Activated B cell treated with CpG ODN at 0.5 μM for 24 hours (primary cell): ENCODE measurements at regions of chr16 and their contacts with region 1.

Region 1: GRCh38 chr16:21708533-21709115 is 44.9 kb downstream of the OTOA start:
- DNase-seq: peak; percentile 51
- ATAC-seq: peak; percentile 68
- H3K4me3 Mint-ChIP-seq: no peak overlapping the region
- H3K27ac Mint-ChIP-seq: no peak overlapping the region
- H3K4me1 Mint-ChIP-seq: peaks cover 9% of the 10 kb centered on the region
- H3K27me3 Mint-ChIP-seq: no peaks in the 10 kb centered on the region
- CTCF ChIP-seq: no peak

Region 2: DNA sequence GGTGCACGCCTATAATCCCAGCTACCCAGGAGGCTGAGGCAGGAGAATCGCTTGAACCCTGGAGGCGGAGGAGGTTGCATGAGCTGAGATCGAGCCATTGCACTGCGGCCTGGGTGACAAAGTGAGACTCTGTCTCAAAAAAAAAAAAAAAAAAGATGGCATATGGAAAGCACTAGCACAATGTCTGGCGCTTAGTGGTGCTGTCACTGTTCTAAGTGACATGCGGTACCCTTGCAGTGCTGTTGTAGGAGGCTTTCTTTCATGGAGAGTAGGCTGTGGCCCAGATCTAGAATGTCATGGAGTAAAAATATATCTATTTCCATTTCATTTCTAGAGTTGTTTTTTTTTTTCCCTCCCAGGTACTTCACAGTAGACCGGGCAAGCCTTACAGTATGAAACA is 123.8 kb before region 1 on chr16:
- CTCF ChIA-PET with region 1: interaction called, 43 read pairs
- POLR2A ChIA-PET with region 1: interaction called, 11 read pairs
- intact Hi-C with region 1: loop called (anchors 1 kb)
- DNase-seq: no peak
- ATAC-seq: no peak
- H3K4me3 Mint-ChIP-seq: no peak overlapping the region
- H3K27ac Mint-ChIP-seq: no peak overlapping the region
- H3K4me1 Mint-ChIP-seq: peaks cover 12% of the 10 kb centered on the region
- H3K27me3 Mint-ChIP-seq: no peaks in the 10 kb centered on the region
- CTCF ChIP-seq: no peak

Region 3: DNA sequence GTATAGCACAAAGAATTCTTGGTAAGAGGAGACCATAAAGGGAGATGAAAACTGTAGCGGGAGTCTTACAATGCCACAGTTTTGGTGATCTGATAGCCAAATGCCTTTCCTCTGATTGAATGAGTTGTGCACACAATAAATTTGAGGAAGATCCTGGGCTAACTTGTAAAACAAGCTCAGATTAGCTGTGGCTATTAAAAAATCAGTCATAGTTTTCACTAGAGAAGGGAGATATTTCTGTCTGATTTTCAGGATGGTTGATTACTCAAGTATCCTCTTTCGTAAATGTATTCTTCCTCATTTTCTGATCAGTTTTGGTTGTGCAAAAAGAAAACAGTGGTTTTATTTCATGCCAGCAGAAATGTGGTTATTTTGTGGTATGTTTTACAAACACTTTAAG is 118.3 kb before region 1 on chr16:
- CTCF ChIA-PET with region 1: interaction called, 6 read pairs
- POLR2A ChIA-PET with region 1: interaction called, 11 read pairs
- intact Hi-C with region 1: no loop called
- DNase-seq: no peak
- ATAC-seq: no peak
- H3K4me3 Mint-ChIP-seq: peak overlapping the region; percentile 19
- H3K27ac Mint-ChIP-seq: peak overlapping the region; percentile 9
- H3K4me1 Mint-ChIP-seq: peaks cover 14% of the 10 kb centered on the region
- H3K27me3 Mint-ChIP-seq: no peaks in the 10 kb centered on the region
- CTCF ChIP-seq: no peak

Region 4: GRCh38 chr16:21646721-21647561 is 61.7 kb before region 1 on chr16:
- CTCF ChIA-PET with region 1: interaction called, 20 read pairs
- POLR2A ChIA-PET with region 1: no interaction called
- intact Hi-C with region 1: no loop called
- DNase-seq: peak; percentile 42
- ATAC-seq: peak; percentile 83
- H3K4me3 Mint-ChIP-seq: peak overlapping the region; percentile 53
- H3K27ac Mint-ChIP-seq: peak overlapping the region; percentile 89
- H3K4me1 Mint-ChIP-seq: peaks cover 77% of the 10 kb centered on the region
- H3K27me3 Mint-ChIP-seq: no peaks in the 10 kb centered on the region
- CTCF ChIP-seq: no peak

Region 5: DNA sequence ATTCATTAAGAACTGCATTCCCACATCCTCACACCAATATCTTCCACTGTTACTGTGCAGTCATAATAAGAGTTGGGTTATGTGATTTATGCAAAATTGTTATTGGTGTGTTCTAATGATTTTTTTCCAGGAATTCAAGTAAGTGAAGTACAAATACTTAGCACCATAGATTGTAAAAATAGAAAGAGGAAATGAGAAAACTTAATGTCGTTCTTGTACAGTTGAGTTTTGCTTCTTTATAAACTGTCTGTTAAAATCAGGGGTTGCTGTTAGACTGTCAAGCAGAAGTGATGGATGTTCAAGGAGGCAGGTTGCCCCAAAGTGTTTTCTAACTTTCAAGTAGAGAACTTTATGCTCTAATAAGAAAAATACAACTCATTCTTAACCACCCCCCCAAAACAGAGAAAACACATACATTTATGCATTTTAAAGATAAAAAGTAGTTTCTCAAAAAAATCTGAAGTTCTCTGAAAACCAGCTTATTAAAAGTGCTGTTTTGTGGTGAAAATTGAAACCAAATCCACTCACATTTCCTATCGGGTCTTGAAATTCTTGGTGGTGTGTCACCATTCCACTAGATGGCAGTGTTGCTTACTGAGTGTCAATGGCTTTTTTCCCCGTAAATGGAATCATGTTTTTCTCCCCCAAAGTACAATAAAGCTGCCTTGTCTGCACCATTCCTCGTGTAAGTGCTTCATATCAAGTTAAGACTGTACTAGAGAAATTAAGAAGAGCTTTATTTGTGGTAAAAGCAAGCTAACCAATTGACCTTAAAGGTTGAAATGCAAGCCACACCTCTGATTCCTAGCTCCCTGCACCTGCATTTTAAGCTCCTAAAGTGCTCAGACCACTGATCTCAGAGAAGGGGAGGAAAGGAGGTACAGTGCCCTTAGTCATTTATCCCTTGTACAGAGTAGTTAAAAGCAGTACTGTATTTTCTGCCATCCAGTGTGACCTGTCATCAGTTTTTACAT is 51.5 kb before region 1 on chr16:
- CTCF ChIA-PET with region 1: interaction called, 54 read pairs
- POLR2A ChIA-PET with region 1: interaction called, 5 read pairs
- intact Hi-C with region 1: loop called (anchors 1 kb)
- DNase-seq: no peak
- ATAC-seq: peak; percentile 79
- H3K4me3 Mint-ChIP-seq: peak overlapping the region; percentile 73
- H3K27ac Mint-ChIP-seq: peak overlapping the region; percentile 86
- H3K4me1 Mint-ChIP-seq: peaks cover 88% of the 10 kb centered on the region
- H3K27me3 Mint-ChIP-seq: no peaks in the 10 kb centered on the region
- CTCF ChIP-seq: peak; percentile 97

Region 6: DNA sequence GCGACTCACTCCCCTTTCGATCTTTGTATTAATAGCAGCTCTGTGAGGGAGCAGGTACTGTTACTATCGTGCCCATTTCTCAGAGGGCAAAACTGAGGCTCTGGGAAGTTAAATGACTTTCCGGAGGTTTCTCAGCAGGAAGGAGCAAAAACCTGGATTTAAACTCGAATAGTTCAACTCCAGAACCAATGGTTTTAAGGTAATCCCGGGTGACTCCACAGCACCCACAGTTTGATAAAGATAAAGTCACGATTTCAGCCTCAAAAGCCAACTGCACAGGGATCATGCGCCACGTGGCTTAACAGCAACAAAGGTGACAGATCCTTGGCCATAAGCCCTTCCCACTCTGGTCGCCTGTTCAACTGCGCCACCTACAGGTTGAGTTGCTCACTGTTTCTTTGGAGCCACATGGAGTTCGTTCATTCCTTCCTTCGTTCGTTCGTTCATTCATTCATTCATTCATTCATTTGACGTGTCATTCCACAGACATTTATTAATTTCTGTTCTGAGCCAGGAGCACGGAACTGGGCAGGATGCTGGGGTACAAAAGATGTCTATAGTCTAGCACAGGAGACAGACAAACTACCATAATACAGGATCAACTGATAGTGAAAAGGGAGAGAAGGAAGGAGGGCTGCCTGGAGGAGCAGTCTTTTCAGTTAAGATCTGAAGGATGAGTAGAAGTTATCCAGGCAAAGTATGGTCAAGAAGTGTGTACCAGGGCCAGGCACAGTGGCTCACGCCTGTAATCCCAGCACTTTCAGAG is 1240.2 kb after region 1 on chr16:
- CTCF ChIA-PET with region 1: no interaction called
- POLR2A ChIA-PET with region 1: no interaction called
- intact Hi-C with region 1: loop called (anchors 2 kb)
- DNase-seq: peak; percentile 26
- ATAC-seq: peak; percentile 73
- H3K4me3 Mint-ChIP-seq: peak overlapping the region; percentile 46
- H3K27ac Mint-ChIP-seq: no peak overlapping the region
- H3K4me1 Mint-ChIP-seq: peaks cover 11% of the 10 kb centered on the region
- H3K27me3 Mint-ChIP-seq: peaks cover 26% of the 10 kb centered on the region
- CTCF ChIP-seq: no peak

Region 7: GRCh38 chr16:23435500-23435899 is 1726.9 kb after region 1 on chr16:
- CTCF ChIA-PET with region 1: interaction called, 3 read pairs
- POLR2A ChIA-PET with region 1: no interaction called
- intact Hi-C with region 1: loop called (anchors 10 kb)
- DNase-seq: peak; percentile 41
- ATAC-seq: peak; percentile 92
- H3K4me3 Mint-ChIP-seq: no peak overlapping the region
- H3K27ac Mint-ChIP-seq: no peak overlapping the region
- H3K4me1 Mint-ChIP-seq: peaks cover 8% of the 10 kb centered on the region
- H3K27me3 Mint-ChIP-seq: no peaks in the 10 kb centered on the region
- CTCF ChIP-seq: peak; percentile 75

Region 8: DNA sequence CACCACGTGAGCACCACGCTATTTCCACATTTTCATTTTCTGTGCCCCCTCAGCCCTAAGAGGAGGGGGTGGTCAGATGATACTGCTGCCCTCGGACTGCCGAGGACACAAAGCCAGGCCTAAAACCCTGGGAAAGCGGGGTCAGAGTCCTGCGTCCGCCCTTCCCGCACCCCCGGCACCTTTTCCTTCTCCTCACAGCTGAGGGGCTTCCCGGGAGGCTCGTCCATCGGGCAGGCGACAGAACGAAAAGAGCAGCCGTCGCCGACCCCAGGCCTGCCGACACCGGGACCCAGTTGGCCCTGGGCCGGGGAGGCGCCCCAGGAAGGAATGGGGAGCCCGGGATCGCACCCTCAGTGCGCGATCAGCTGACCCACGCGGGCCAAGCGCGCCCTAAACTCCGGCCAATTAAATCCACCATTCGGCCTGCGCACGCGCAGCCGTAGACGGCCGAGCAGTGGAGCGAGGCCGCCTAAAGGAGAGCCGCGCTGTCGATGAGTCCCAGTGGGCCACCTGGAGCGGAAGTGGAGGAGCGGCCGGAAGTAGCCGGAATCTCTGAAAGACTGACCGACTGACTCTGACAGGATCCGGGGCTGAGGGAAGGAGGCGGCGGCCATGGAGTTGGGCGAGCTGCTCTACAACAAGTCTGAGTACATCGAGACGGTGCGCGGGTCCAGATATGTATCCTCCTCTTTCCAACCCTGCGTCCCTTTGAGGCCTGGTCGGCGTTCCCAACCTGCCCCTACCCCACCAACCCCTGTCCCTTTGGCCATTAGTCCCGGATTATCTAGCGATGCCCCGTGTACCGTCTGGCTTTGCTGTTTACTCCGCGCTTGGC is 1932.5 kb after region 1 on chr16 and contains the starts of genes DCTN5 and PALB2:
- CTCF ChIA-PET with region 1: no interaction called
- POLR2A ChIA-PET with region 1: no interaction called
- intact Hi-C with region 1: no loop called
- DNase-seq: peak; percentile 81
- ATAC-seq: peak; percentile 94
- H3K4me3 Mint-ChIP-seq: peak within 1 kb of the TSS; percentile 98
- H3K27ac Mint-ChIP-seq: peak within 1 kb of the TSS; percentile 97
- H3K4me1 Mint-ChIP-seq: peaks cover 37% of the 10 kb centered on the region
- H3K27me3 Mint-ChIP-seq: no peaks in the 10 kb centered on the region
- CTCF ChIP-seq: no peak
- total RNA-seq, gene DCTN5: 62.8 and 64.1 TPM in 2 replicates
- total RNA-seq, gene PALB2: 16.0 and 19.8 TPM in 2 replicates